ENCODE measurements at regions of chr1 and their contacts with region 1.

Region 1: GRCh38 chr1:19582302-19582701 is 61.8 kb upstream of the NBL1 start:
- DNase-seq: peak; percentile 82
- H3K4me3 Mint-ChIP-seq: no peak overlapping the region
- H3K27ac Mint-ChIP-seq: no peak overlapping the region
- H3K4me1 Mint-ChIP-seq: peaks cover 14% of the 10 kb centered on the region
- H3K27me3 Mint-ChIP-seq: peaks cover 9% of the 10 kb centered on the region

Region 2: DNA sequence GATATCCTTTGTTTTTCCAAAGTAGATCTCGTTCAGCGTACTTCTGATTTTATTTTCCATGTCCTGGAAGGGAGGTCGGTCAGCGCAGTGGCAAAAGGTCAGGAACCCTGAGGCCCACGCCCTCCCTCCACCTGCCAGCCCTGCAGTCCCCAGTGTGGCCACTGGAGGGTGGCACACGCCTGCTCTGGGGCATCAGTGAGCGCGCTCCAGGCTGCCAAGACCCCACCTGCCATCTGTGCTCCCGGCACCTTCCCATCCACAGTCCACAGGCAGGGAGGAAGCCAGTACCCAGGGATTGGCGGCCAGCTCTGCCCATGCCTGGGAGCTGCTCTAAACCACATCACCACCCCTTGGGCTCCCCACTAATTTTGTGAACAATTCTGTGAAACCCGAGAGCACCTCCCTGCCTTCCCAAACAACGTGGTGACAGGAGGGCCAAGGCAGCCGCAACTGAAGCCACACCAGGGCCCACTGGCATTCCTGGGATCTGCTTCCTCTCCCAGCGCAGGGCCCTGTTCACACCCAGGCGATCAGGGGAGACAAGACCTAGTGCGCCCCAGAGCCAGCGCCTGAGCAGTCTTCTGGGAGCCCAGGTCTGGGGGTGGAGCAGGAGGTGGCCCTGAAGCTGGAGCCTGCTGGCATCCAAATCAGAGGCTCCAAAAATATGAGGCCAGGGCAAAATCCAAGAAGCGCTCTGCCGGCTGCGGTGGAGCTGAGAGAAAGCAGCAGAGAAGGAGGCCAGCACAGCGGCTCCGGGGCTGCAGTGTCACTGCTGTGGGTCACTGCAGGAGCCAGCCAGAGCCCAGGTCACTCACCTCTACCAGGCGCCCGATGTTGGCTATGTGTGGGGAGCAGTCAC is 237.7 kb before region 1 on chr1:
- CTCF ChIA-PET with region 1: interaction called, 10 read pairs
- POLR2A ChIA-PET with region 1: no interaction called
- DNase-seq: peak; percentile 47
- H3K4me3 Mint-ChIP-seq: no peak overlapping the region
- H3K27ac Mint-ChIP-seq: no peak overlapping the region
- H3K4me1 Mint-ChIP-seq: peaks cover 4% of the 10 kb centered on the region
- H3K27me3 Mint-ChIP-seq: no peaks in the 10 kb centered on the region

Region 3: GRCh38 chr1:19390901-19391595 is 191.3 kb before region 1 on chr1:
- CTCF ChIA-PET with region 1: interaction called, 35 read pairs
- POLR2A ChIA-PET with region 1: interaction called, 7 read pairs
- DNase-seq: peak; percentile 67
- H3K4me3 Mint-ChIP-seq: peak overlapping the region; percentile 64
- H3K27ac Mint-ChIP-seq: peak overlapping the region; percentile 93
- H3K4me1 Mint-ChIP-seq: peaks cover 71% of the 10 kb centered on the region
- H3K27me3 Mint-ChIP-seq: no peaks in the 10 kb centered on the region

Region 4: GRCh38 chr1:19547814-19548213 is 34.5 kb before region 1 on chr1:
- CTCF ChIA-PET with region 1: no interaction called
- POLR2A ChIA-PET with region 1: no interaction called
- DNase-seq: no peak
- H3K4me3 Mint-ChIP-seq: no peak overlapping the region
- H3K27ac Mint-ChIP-seq: no peak overlapping the region
- H3K4me1 Mint-ChIP-seq: peaks cover 4% of the 10 kb centered on the region
- H3K27me3 Mint-ChIP-seq: peaks cover 31% of the 10 kb centered on the region

Region 5: GRCh38 chr1:19651141-19651737 is 68.9 kb after region 1 on chr1:
- CTCF ChIA-PET with region 1: interaction called, 18 read pairs
- POLR2A ChIA-PET with region 1: interaction called, 5 read pairs
- DNase-seq: peak; percentile 60
- H3K4me3 Mint-ChIP-seq: no peak overlapping the region
- H3K27ac Mint-ChIP-seq: no peak overlapping the region
- H3K4me1 Mint-ChIP-seq: peaks cover 32% of the 10 kb centered on the region
- H3K27me3 Mint-ChIP-seq: no peaks in the 10 kb centered on the region

Measured in activated CD4-positive, alpha-beta memory T cell treated with anti-CD3 and anti-CD28 coated beads, Interleukin-2, amount 10 ng/mL, durations not matched to agents 7 days and 5 days (primary cell).